Dorsolateral prefrontal cortex (tissue), 120 donors: ENCODE measurements at regions of chr19 and their contacts with region 1.

Region 1: GRCh38 chr19:43754503-43755255 is at the start of gene SMG9:
- DNase-seq: peak; percentile 89 to 98 (median 95)
- H3K4me3 ChIP-seq: peak within 1 kb of the TSS; percentile 61 to 98 (median 85)
- H3K27ac ChIP-seq: peak within 1 kb of the TSS; percentile 86 to 100 (median 99)
- H3K27me3 ChIP-seq: no peaks in the 10 kb centered on the region
- CTCF ChIP-seq: peak in 12 of 56 donors; percentile 2 to 33 (median 14)
- total RNA-seq, gene SMG9: 48.9 to 130 (median 77.0) TPM

Region 2: DNA sequence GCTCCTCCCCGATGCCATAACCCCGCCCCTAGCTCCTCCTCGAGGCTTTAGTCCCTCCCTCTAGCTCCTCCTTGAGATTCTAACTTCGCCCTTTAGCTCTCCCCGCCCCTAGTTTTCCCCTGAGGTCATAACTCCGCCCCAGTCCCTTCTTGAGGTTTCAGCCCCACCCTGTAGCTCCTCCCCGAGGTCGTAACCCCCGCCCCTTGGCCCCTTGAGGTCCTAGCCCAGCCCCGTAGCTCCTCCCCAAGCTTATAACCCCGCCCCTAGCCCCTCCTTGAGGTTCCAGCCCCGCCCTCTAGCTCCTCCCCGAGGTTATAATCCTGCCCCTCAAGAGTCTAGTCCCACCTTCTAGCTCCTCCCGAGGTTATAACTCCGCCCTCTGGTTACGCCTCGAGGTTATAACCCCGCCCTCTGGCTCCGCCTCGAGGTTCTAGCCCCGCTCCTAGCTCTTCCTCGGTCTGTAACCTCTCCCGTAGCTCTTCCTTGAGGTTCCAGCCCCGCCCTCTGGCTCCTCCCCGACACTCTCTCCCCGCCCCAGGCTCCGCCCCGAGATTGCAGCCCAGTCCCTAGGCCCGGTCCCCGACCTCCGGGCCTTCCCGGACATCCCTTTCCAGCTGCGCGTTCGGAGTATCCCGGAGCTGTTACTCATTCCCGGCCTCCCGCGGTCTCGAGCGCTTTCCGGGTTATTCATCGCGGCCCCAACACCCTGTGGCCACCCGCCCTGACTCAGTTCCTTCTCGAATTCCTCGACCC is 86.1 kb before region 1 on chr19:
- intact Hi-C with region 1: loop called (anchors 2 to 5 kb)
- DNase-seq: peak; percentile 88 to 98 (median 97)
- H3K4me3 ChIP-seq: peak overlapping the region; percentile 44 to 82 (median 67)
- H3K27ac ChIP-seq: peak overlapping the region; percentile 17 to 96 (median 89)
- H3K27me3 ChIP-seq: no peaks in the 10 kb centered on the region
- CTCF ChIP-seq: peak in 8 of 56 donors; percentile 1 to 16 (median 11)

Region 3: DNA sequence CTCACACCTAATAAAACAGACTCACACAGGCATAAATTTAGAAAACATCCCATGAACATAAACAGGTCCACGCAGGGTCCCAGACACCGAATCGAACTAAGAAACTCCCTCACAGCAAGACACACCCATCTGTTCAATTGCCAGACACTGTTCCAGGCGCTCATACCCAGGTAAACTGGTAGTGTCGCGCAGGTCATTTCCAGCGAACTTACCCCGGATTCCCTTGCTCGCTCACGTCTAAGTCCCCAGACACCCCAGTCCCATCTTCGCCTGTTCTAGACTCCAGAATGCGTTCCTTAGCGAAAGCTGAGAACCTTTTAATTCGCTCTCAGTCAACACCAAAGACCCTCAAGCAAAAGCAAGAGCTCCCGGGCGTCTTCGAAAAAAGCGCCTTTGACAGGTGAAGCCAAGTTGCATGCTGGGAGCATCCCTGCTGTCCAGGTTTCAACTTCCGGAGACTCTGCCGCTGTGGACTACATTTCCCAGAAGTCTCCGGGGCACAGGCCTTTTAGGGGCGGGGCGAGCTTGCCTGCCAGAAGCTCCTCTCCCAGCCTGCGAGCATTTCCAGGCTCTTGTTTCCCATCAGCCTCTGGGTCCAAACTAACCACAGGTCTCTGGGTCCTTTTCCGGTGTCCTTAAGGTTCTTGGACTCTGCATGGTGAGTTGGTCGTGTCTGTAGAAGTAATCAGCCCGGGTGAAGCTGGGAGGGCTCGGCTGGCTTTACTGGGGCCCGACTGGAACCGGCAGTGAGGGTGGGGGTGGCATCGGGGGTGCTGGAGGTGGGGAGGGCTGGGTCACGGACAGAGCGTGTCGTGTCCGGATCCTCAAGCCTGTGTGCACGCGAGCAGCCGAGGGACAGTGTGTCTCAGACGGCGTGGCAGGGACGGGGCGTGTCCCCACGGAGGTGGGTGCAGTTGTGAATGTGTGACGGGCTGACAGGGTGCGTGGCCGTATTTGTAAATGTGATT is 72.4 kb after region 1 on chr19 and contains the start of gene ZNF283:
- intact Hi-C with region 1: loop called in 1 of 2 experiments (anchors 5 kb)
- DNase-seq: peak; percentile 78 to 95 (median 94)
- H3K4me3 ChIP-seq: peak within 1 kb of the TSS; percentile 50 to 86 (median 76)
- H3K27ac ChIP-seq: peak within 1 kb of the TSS in 36 of 59 donors; percentile 3 to 78 (median 48)
- H3K27me3 ChIP-seq: no peaks in the 10 kb centered on the region
- CTCF ChIP-seq: peak in 22 of 56 donors; percentile 11 to 43 (median 24)
- total RNA-seq, gene ZNF283: 17.2 to 43.0 (median 24.6) TPM

Region 4: DNA sequence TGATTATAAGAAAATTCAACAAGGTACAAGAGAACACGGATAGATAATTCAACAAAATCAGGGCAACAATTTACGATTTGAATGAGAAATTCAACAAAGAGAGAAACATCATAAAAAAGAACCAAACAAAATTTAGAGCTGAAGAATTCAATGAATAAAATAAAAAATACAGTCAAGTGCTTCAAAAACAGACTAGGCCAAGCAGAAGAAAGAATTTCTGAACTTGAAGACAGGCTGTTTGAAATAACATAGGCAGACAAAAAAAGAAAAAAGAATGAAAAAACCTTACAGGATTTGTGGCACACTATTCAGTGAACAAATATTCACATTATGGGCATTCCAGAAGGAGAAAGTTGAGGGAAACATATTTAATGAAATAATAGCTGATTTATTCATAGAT is 103.5 kb after region 1 on chr19:
- intact Hi-C with region 1: no loop called
- DNase-seq: no peak
- H3K4me3 ChIP-seq: no peak overlapping the region
- H3K27ac ChIP-seq: no peak overlapping the region
- H3K27me3 ChIP-seq: no peaks in the 10 kb centered on the region
- CTCF ChIP-seq: no peak

Region 5: DNA sequence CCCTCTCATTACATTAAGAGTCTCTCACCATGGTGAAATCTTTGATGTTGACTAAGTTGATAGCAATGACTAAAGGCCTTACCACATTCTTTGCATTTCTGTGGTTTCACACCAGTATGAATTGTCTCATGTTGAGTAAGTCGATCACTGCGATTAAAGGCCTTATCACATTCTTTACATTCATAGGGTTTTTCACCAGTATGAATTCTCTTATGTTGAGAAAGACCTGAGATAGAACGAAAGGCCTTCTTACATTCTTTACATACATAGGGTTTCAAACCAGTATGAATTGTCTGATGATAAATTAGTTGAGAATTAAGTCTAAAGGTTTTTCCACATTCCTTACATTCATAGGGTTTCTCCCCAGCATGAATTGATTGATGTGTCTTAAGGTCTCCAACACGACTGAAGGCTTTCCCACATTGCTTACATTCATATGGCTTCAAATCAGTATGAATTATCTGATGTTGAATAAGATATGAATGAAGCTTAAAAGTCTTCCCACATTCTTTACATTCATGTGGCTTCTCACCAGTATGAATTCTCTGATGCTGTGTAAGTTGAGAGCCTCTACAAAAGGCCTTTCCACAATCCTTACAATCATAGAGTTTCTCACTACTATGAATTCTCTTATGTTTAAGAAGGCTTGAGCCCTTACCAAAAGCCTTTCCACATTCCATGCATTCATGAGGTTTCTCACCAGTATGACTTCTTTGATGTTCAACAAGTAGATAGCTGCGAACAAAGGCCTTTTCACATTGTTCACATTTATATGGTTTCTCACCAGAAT is 118.1 kb after region 1 on chr19:
- intact Hi-C with region 1: no loop called
- DNase-seq: no peak
- H3K4me3 ChIP-seq: no peak overlapping the region
- H3K27ac ChIP-seq: no peak overlapping the region
- H3K27me3 ChIP-seq: peaks cover 0 to 5% (median 0%) of the 10 kb centered on the region in 45 donors
- CTCF ChIP-seq: no peak

Region 6: GRCh38 chr19:43913383-43913782 is 158.7 kb after region 1 on chr19:
- intact Hi-C with region 1: no loop called
- DNase-seq: no peak
- H3K4me3 ChIP-seq: no peak overlapping the region
- H3K27ac ChIP-seq: no peak overlapping the region
- H3K27me3 ChIP-seq: peaks cover 0 to 3% (median 0%) of the 10 kb centered on the region in 45 donors
- CTCF ChIP-seq: no peak